Activated T-helper 1 cell treated with anti-CD3 and anti-CD28 coated beads, Interleukin-12 subunit alpha, Interleukin-12 subunit beta, Interleukin-2, Interleukin-4 antibody, amounts not matched to agents 30 ng/mL and 10 ng/mL and 1 ng/mL, durations not matched to agents 14 hours and 24 hours and 36 hours (primary cell): ENCODE measurements at regions of chr4 and their contacts with region 1.

Region 1: DNA sequence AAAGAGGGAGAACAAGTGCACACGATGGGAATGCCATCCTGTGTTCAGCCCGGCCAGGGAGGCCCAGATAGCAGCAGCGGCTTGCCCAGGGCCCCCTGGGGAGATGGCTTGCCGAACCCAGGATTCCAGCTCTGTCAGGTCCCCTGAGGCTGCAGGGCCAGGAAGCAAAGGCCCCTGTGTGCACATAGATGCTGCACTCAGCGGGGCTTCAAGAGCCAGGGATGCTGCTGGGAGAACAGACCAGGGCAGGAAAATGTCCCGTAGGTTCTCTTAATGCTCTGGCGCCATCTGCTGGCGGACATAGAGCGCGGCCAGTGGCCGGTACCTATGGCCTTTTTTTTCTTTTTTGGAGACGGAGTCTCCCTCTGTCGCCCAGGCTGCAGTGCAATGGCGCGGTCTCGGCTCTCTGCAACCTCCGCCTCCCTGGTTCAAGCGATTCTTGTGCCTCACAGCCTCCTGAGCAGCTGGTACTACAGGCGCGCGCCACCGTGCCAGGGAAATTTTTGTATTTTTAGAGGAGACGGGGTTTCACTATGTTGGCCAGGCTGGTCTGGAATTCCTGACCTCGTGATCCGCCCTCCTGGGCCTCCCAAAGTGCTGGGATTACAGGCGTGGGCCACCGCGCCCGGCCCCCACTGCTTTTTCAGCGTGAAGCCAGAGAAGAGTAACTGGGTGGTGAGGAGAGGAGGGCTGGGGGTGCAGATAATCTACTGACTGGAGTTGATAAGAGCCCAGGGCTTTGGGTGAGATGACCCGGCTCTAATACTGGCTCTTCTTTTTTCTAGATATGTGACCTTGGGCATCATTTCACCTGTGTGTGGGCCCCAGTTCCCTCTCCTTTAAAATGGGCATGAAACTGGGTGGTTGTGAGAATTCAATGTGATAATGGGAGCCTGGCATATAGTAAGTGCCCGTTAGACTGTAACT is 22.5 kb downstream of the MED28 start:
- DNase-seq: peak; percentile 48
- H3K4me3 Mint-ChIP-seq: no peak overlapping the region
- H3K27ac Mint-ChIP-seq: no peak overlapping the region
- H3K4me1 Mint-ChIP-seq: no peaks in the 10 kb centered on the region
- H3K27me3 Mint-ChIP-seq: no peaks in the 10 kb centered on the region

Region 2: GRCh38 chr4:17576932-17577665 is 59.9 kb before region 1 on chr4 and contains the start of gene LAP3:
- intact Hi-C with region 1: loop called (anchors 1 kb)
- DNase-seq: peak; percentile 98
- H3K4me3 Mint-ChIP-seq: peak within 1 kb of the TSS; percentile 93
- H3K27ac Mint-ChIP-seq: peak within 1 kb of the TSS; percentile 94
- H3K4me1 Mint-ChIP-seq: peaks cover 38% of the 10 kb centered on the region
- H3K27me3 Mint-ChIP-seq: no peaks in the 10 kb centered on the region
- total RNA-seq, gene LAP3: 108 and 109 TPM in 2 replicates